Panc1 (cell line): ENCODE measurements at regions of chr6 and their contacts with region 1.

Region 1: DNA sequence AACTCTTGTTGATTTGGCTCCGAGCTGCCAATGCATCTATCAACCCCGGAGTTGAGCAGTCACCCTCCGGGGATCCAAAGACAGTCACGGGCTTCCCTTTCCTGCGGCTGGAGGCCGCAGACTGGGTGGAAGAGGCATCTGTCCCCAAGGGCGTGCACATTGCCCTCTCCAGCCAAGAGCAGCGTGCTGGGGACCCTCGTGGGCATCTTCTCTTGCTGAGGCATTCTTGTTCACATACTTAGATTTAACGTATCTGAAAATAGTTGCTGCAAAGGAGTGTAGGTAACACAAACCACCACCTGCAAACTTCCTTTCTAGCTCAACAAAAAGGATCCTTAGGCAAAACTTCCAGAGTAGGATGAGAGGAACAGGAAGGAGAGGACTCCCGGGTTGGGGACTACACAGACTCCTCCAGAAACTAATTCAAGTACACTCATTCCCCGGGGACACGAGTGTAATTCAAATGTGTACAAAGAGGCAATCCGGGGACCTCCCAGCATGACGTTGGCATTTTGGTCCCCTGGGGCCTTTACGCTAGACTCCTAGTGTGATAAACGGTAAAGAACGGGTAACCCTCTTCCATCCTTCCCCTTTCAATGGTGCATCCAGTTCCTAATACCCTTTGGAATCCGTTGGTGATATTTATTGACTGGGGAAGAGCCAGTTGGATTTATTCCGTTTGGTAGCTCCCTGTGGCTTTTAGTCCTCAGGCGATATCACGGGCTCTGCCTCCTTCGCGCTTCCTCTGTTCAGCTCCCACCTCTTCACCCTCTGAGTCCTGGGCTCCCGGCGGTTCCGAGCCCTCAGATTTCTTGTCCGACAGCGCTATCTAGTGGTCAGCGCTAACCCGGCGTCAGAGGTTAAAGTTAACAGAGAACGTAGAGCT is 2.7 kb upstream of the COL12A1 start:
- DNase-seq: peak; percentile 41
- ATAC-seq: peak; percentile 81
- H3K4me3 ChIP-seq: peak overlapping the region in 1 of 2 experiments; percentile 49; a peak in 2 of 4 replicates
- H3K27ac ChIP-seq: no peak overlapping the region
- H3K4me1 ChIP-seq: peaks cover 10% of the 10 kb centered on the region
- H3K27me3 ChIP-seq: peaks cover 5% of the 10 kb centered on the region; the same call in 1 of the 2 replicates
- CTCF ChIP-seq: peak; percentile 89

Region 2: GRCh38 chr6:73739096-73739495 is 1469.4 kb before region 1 on chr6:
- CTCF ChIA-PET with region 1: interaction called, 5 read pairs
- POLR2A ChIA-PET with region 1: no interaction called
- in situ Hi-C with region 1: no loop called
- intact Hi-C with region 1: loop called (anchors 5 kb)
- DNase-seq: no peak
- ATAC-seq: peak; percentile 75; the same call in 1 of the 2 replicates
- H3K4me3 ChIP-seq: no peak overlapping the region
- H3K27ac ChIP-seq: no peak overlapping the region
- H3K4me1 ChIP-seq: no peaks in the 10 kb centered on the region
- H3K27me3 ChIP-seq: no peaks in the 10 kb centered on the region
- CTCF ChIP-seq: peak; percentile 78; the same call in 1 of the 2 replicates

Region 3: GRCh38 chr6:73969971-73970970 is 1238.3 kb before region 1 on chr6:
- CTCF ChIA-PET with region 1: interaction called, 10 read pairs
- POLR2A ChIA-PET with region 1: no interaction called
- in situ Hi-C with region 1: no loop called
- intact Hi-C with region 1: loop called (anchors 5 kb)
- DNase-seq: peak; percentile 35
- ATAC-seq: peak; percentile 81
- H3K4me3 ChIP-seq: no peak overlapping the region
- H3K27ac ChIP-seq: peak overlapping the region; percentile 45; the same call in 1 of the 2 replicates
- H3K4me1 ChIP-seq: no peaks in the 10 kb centered on the region
- H3K27me3 ChIP-seq: no peaks in the 10 kb centered on the region
- CTCF ChIP-seq: peak; percentile 77; the same call in 1 of the 2 replicates

Region 4: DNA sequence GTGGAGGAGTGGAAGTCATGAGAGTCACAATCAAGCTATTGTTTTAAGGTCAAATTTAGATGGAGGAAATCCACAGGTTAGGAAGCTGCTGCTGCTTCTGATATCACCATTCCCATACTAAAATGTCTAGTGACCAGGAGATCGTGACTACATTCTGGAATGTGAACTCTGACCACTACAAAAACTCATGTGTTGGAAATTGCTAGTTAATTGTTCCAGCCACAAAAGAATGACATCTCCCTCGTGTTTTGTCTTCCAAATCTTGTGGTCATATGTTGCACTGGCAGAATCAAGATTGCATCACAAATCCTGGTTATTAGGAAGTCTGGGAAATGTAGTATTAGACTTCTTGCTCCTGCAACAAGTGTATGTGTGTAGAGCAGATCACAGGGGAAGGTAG is 1070.6 kb before region 1 on chr6:
- CTCF ChIA-PET with region 1: no interaction called
- POLR2A ChIA-PET with region 1: no interaction called
- in situ Hi-C with region 1: no loop called
- intact Hi-C with region 1: no loop called
- DNase-seq: no peak
- ATAC-seq: no peak
- H3K4me3 ChIP-seq: no peak overlapping the region
- H3K27ac ChIP-seq: no peak overlapping the region
- H3K4me1 ChIP-seq: no peaks in the 10 kb centered on the region
- H3K27me3 ChIP-seq: no peaks in the 10 kb centered on the region
- CTCF ChIP-seq: no peak

Region 5: GRCh38 chr6:74343804-74344203 is 864.7 kb before region 1 on chr6:
- CTCF ChIA-PET with region 1: no interaction called
- POLR2A ChIA-PET with region 1: no interaction called
- in situ Hi-C with region 1: no loop called
- intact Hi-C with region 1: loop called (anchors 10 kb)
- DNase-seq: no peak
- ATAC-seq: no peak
- H3K4me3 ChIP-seq: no peak overlapping the region
- H3K27ac ChIP-seq: no peak overlapping the region
- H3K4me1 ChIP-seq: no peaks in the 10 kb centered on the region
- H3K27me3 ChIP-seq: no peaks in the 10 kb centered on the region
- CTCF ChIP-seq: peak; percentile 25; the same call in 1 of the 2 replicates

Region 6: DNA sequence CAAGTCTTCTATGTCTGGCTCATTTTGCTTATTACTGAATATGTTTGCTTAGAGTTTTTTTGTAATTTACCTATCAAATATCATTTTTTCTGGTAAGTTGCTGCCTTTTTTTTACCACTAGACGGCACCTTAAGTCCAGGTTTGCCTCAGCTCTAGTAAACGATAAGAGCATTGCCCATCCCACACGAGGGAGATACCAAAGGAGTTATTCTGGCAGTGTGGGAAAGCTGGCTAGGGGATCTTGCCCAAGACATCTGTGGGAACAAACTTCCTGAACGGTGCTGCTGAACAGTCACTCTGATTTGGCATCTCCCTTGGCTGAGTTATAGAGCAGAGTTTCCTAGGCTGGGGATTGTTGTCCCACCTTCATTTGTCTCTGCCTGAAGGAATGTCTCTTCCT is 309.1 kb before region 1 on chr6:
- CTCF ChIA-PET with region 1: no interaction called
- POLR2A ChIA-PET with region 1: no interaction called
- in situ Hi-C with region 1: no loop called
- intact Hi-C with region 1: loop called (anchors 10 kb)
- DNase-seq: no peak
- ATAC-seq: no peak
- H3K4me3 ChIP-seq: no peak overlapping the region
- H3K27ac ChIP-seq: no peak overlapping the region
- H3K4me1 ChIP-seq: no peaks in the 10 kb centered on the region
- H3K27me3 ChIP-seq: no peaks in the 10 kb centered on the region
- CTCF ChIP-seq: no peak

Region 7: GRCh38 chr6:75183099-75183541 is 25.4 kb before region 1 on chr6:
- CTCF ChIA-PET with region 1: no interaction called
- POLR2A ChIA-PET with region 1: no interaction called
- in situ Hi-C with region 1: no loop called
- intact Hi-C with region 1: no loop called
- DNase-seq: no peak
- ATAC-seq: no peak
- H3K4me3 ChIP-seq: no peak overlapping the region
- H3K27ac ChIP-seq: no peak overlapping the region
- H3K4me1 ChIP-seq: no peaks in the 10 kb centered on the region
- H3K27me3 ChIP-seq: no peaks in the 10 kb centered on the region
- CTCF ChIP-seq: no peak

Region 8: DNA sequence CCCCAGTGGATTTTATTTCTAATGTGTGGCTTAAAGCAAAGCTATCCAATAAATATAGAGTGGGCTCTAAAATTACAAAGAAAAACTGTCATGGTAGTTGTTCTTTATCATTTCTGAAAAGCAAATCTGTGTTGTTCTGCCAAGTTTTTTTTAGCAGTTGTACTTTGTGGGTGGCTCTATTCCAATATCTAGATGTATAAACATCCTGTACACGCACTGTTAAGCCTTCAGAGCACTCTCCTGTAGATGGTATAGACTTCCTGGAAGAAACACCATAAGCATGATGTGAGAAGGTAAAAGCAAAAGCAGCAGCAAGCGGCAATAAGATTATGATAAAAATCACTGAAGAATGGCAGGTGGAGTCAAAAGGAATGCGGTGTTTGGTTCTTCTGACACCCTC is 97.5 kb after region 1 on chr6:
- CTCF ChIA-PET with region 1: no interaction called
- POLR2A ChIA-PET with region 1: no interaction called
- in situ Hi-C with region 1: no loop called
- intact Hi-C with region 1: no loop called
- DNase-seq: no peak
- ATAC-seq: no peak
- H3K4me3 ChIP-seq: no peak overlapping the region
- H3K27ac ChIP-seq: no peak overlapping the region
- H3K4me1 ChIP-seq: no peaks in the 10 kb centered on the region
- H3K27me3 ChIP-seq: no peaks in the 10 kb centered on the region; the same call in 1 of the 2 replicates
- CTCF ChIP-seq: no peak

Region 9: GRCh38 chr6:75922226-75922625 is 713.7 kb after region 1 on chr6:
- CTCF ChIA-PET with region 1: no interaction called
- POLR2A ChIA-PET with region 1: no interaction called
- in situ Hi-C with region 1: no loop called
- intact Hi-C with region 1: no loop called
- DNase-seq: no peak
- ATAC-seq: no peak
- H3K4me3 ChIP-seq: no peak overlapping the region
- H3K27ac ChIP-seq: no peak overlapping the region
- H3K4me1 ChIP-seq: no peaks in the 10 kb centered on the region
- H3K27me3 ChIP-seq: no peaks in the 10 kb centered on the region
- CTCF ChIP-seq: no peak